ENCODE measurements at regions of chrX and their contacts with region 1.

Region 1: DNA sequence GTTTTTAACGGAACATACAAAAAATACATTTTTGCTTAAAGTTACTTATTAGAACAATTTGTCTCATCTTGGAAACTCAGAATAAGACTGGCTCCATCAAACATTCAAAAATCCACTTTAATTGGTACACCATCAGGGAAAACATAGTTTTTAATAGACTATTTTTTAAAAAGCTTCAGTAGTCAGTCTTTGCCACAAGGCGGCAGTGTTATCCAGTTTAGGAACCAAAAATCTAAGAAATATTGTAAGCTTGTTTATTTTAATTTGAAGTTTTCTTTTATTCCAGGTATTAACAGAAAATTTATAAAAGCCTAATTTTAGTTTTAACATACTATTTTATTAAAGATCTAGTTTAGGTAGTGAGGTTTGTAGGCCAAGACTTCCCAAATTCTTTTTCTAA is 107.7 kb downstream of the APOOL start:
- DNase-seq: peak; percentile 4 to 14 (median 10)
- ATAC-seq: no peak
- H3K4me3 ChIP-seq: no peak overlapping the region
- H3K27ac ChIP-seq: no peak overlapping the region
- H3K4me1 ChIP-seq: no peaks in the 10 kb centered on the region
- H3K27me3 ChIP-seq: no peaks in the 10 kb centered on the region
- CTCF ChIP-seq: peak in 2 of 3 experiments; percentile 41 to 61; a peak in 3 of 6 replicates
- EP300 ChIP-seq: no peak
- POLR2A ChIP-seq: no peak
- RAD21 ChIP-seq: peak in 1 of 2 experiments; percentile 65; a peak in 3 of 4 replicates

Region 2: GRCh38 chrX:85084770-85085393 is 26.5 kb before region 1 on chrX:
- CTCF ChIA-PET with region 1: no interaction called
- POLR2A ChIA-PET with region 1: no interaction called
- in situ Hi-C with region 1: no loop called
- intact Hi-C with region 1: loop called (anchors 2 kb)
- DNase-seq: peak; percentile 23 to 49 (median 42)
- ATAC-seq: peak; percentile 70; the same call in 2 of the 3 replicates
- H3K4me3 ChIP-seq: no peak overlapping the region
- H3K27ac ChIP-seq: no peak overlapping the region
- H3K4me1 ChIP-seq: no peaks in the 10 kb centered on the region
- H3K27me3 ChIP-seq: no peaks in the 10 kb centered on the region
- CTCF ChIP-seq: peak; percentile 33 to 55 (median 39); a peak in 3 of 6 replicates
- EP300 ChIP-seq: no peak
- POLR2A ChIP-seq: no peak
- RAD21 ChIP-seq: peak; percentile 30 to 47

Region 3: DNA sequence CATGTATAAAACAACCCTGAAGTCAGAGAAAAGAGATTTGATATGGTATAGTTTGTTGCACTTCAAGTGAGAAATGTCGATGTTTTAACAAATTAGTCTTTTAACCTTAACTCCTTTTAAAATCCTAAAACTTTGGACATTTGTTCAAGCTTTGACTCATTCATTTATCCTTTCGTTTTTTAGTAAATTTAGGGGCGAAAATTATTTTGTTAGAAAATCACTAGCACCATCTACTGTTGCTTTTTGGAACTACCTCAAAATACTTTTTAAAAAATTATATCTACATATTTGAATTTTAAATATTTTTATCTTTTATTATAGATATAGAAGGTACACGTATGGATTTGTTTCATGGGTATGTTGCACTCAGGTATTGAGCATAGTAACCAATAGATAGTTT is 433.3 kb after region 1 on chrX:
- CTCF ChIA-PET with region 1: interaction called, 3 read pairs
- POLR2A ChIA-PET with region 1: no interaction called
- in situ Hi-C with region 1: loop called (anchors 25 kb)
- intact Hi-C with region 1: loop called (anchors 2 kb)
- DNase-seq: no peak
- ATAC-seq: no peak
- H3K4me3 ChIP-seq: no peak overlapping the region
- H3K27ac ChIP-seq: no peak overlapping the region
- H3K4me1 ChIP-seq: no peaks in the 10 kb centered on the region
- H3K27me3 ChIP-seq: no peaks in the 10 kb centered on the region
- CTCF ChIP-seq: peak in 1 of 3 experiments; percentile 47; a peak in 2 of 6 replicates
- EP300 ChIP-seq: no peak
- POLR2A ChIP-seq: no peak
- RAD21 ChIP-seq: peak; percentile 24 to 26; a peak in 2 of 4 replicates